OCI-LY7 (cell line): ENCODE measurements at regions of chr12 and their contacts with region 1.

Region 1: GRCh38 chr12:26396402-26396801 is 201.0 kb downstream of the SSPN start:
- DNase-seq: no peak
- H3K4me3 ChIP-seq: no peak overlapping the region
- H3K27ac ChIP-seq: no peak overlapping the region
- H3K4me1 ChIP-seq: no peaks in the 10 kb centered on the region
- CTCF ChIP-seq: no peak

Region 2: GRCh38 chr12:26044592-26044991 is 351.8 kb before region 1 on chr12:
- CTCF ChIA-PET with region 1: no interaction called
- POLR2A ChIA-PET with region 1: interaction called, 10 read pairs
- intact Hi-C with region 1: no loop called
- DNase-seq: no peak
- H3K4me3 ChIP-seq: no peak overlapping the region
- H3K27ac ChIP-seq: no peak overlapping the region
- H3K4me1 ChIP-seq: no peaks in the 10 kb centered on the region
- CTCF ChIP-seq: no peak